ENCODE measurements at regions of chr14 and their contacts with region 1.

Region 1: GRCh38 chr14:99838639-99839303 is 45.6 kb downstream of the EML1 start:
- DNase-seq: peak; percentile 36
- ATAC-seq: peak; percentile 67
- H3K4me3 ChIP-seq: no peak overlapping the region
- H3K27ac ChIP-seq: no peak overlapping the region
- H3K4me1 ChIP-seq: peaks cover 9% of the 10 kb centered on the region
- H3K27me3 ChIP-seq: no peaks in the 10 kb centered on the region
- CTCF ChIP-seq: no peak

Region 2: GRCh38 chr14:99628832-99629618 is 209.7 kb before region 1 on chr14:
- CTCF ChIA-PET with region 1: no interaction called
- POLR2A ChIA-PET with region 1: no interaction called
- intact Hi-C with region 1: no loop called
- DNase-seq: peak; percentile 82
- ATAC-seq: peak; percentile 98
- H3K4me3 ChIP-seq: peak overlapping the region; percentile 9; the same call in 1 of the 2 replicates
- H3K27ac ChIP-seq: no peak overlapping the region
- H3K4me1 ChIP-seq: 0 out of 2 replicates have a peak, but pooled peaks cover 3% of the 10 kb centered on the region
- H3K27me3 ChIP-seq: no peaks in the 10 kb centered on the region
- CTCF ChIP-seq: peak; percentile 97

Region 3: DNA sequence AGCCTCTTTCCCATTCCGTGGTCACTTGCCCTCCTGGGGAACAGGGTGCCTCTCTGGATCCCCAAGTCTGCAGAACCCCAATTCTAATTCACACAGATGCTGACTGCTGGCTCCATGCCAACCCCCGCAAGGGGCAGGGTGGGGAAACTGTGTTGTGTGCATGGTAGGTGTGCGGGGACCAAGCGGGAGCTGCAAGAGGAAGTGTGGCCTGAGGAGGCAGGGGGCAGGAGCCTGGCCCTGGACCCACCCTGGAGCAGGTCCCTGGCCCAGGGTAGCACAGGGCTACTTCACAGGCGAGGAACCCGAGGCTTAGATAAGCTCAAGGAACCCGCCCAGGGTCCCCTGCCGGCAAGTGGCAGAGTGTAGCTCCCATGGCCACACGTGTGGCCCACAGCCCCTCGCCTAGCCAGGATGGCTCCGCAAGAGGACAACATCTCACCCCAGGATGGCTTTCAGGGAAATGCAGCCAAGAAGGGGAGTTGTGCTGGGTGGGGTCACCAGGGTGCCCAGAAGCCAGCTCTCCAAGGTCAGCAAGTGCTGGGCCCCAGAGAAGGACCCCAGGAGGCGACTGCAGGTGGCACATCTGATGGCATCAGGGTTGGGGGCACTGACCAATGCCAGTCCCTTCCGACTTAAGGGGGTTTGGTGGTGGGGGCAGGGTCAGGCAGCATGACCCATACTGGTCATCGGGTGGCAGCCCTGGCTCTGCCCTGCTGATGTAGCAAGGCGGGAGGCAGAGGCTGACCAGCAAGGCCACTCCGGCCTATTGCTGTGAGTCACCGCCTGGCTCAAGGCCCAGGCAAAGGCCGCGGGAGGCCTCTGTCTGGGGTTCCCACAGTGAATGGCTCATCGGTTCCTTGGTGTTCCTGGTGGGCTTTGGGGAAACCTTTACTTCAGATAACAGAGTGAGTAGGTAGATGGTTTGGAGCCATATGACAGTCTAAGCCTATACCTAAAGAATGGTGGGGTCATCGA is 82.9 kb before region 1 on chr14:
- CTCF ChIA-PET with region 1: no interaction called
- POLR2A ChIA-PET with region 1: interaction called, 10 read pairs
- intact Hi-C with region 1: no loop called
- DNase-seq: peak; percentile 86
- ATAC-seq: peak; percentile 52
- H3K4me3 ChIP-seq: no peak overlapping the region
- H3K27ac ChIP-seq: peak overlapping the region; percentile 74
- H3K4me1 ChIP-seq: peaks cover 71% of the 10 kb centered on the region
- H3K27me3 ChIP-seq: no peaks in the 10 kb centered on the region
- CTCF ChIP-seq: no peak

Region 4: GRCh38 chr14:99879401-99880295 is 40.9 kb after region 1 on chr14:
- CTCF ChIA-PET with region 1: no interaction called
- POLR2A ChIA-PET with region 1: no interaction called
- intact Hi-C with region 1: loop called (anchors 5 kb)
- DNase-seq: peak; percentile 86
- ATAC-seq: peak; percentile 93
- H3K4me3 ChIP-seq: peak overlapping the region; percentile 25; the same call in 1 of the 2 replicates
- H3K27ac ChIP-seq: peak overlapping the region; percentile 57
- H3K4me1 ChIP-seq: peaks cover 20% of the 10 kb centered on the region
- H3K27me3 ChIP-seq: no peaks in the 10 kb centered on the region
- CTCF ChIP-seq: no peak

Measured in PC-3 (cell line).